CD4-positive, alpha-beta memory T cell (primary cell): ENCODE measurements at regions of chr1 and their contacts with region 1.

Region 1: DNA sequence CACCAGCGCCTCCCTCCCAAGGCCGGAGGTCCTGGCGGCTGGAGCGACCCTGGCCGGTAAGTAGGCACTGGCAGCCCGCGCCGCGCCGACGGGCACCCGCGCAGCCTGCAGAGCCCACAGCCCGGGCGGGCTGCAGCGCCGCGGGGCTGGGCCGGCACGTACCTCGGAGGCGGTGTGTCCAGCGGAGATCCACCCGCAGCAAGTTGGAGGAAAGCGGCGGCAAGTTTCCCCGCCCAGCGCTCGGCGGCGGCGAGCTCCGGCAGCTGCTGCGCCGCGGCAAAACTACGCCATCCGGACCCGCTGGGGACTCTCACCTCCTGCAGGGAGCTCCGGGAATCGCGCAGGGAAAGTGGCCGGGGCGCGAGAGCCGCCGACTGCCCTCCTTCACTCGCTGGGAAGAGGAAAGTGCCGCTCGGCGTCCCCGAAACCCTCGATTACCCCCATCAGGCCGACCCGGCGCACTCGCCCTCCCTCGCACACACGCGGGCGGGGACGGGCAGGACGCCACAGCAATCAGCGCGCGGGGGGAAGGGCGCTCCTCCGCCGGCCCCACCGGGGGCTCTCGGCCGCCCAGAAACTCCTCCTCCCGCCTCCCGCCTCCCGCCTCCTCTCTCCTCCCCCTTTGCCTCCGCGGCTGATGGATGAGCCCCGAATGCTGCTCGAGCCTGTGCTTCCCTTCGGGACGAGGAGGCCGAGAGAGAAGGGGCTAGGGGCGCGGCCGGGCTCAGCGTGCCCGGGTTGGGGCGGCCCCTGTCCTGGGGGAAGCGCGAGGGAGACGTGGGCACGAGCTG is at the start of gene TGFBR3:
- DNase-seq: peak; percentile 78 to 81 (median 80)
- H3K4me3 ChIP-seq: peak within 1 kb of the TSS; percentile 67 to 87
- H3K4me3 Mint-ChIP-seq: peak within 1 kb of the TSS; percentile 94 to 99 (median 97)
- H3K27ac ChIP-seq: peak within 1 kb of the TSS; percentile 65
- H3K27ac Mint-ChIP-seq: peak within 1 kb of the TSS; percentile 84 to 97 (median 94)
- H3K4me1 ChIP-seq: peaks cover 37% of the 10 kb centered on the region
- H3K4me1 Mint-ChIP-seq: peaks cover 30 to 52% (median 39%) of the 10 kb centered on the region in 4 donors
- H3K27me3 ChIP-seq: no peaks in the 10 kb centered on the region
- H3K27me3 Mint-ChIP-seq: no peaks in the 10 kb centered on the region
- total RNA-seq, gene TGFBR3: 44.4 to 47.3 TPM

Region 2: GRCh38 chr1:90308421-90308820 is 1577.5 kb before region 1 on chr1:
- CTCF ChIA-PET with region 1: no interaction called
- POLR2A ChIA-PET with region 1: no interaction called
- intact Hi-C with region 1: no loop called
- DNase-seq: no peak
- H3K4me3 ChIP-seq: no peak overlapping the region
- H3K4me3 Mint-ChIP-seq: no peak overlapping the region
- H3K27ac ChIP-seq: no peak overlapping the region
- H3K27ac Mint-ChIP-seq: no peak overlapping the region
- H3K4me1 ChIP-seq: no peaks in the 10 kb centered on the region
- H3K4me1 Mint-ChIP-seq: no peaks in the 10 kb centered on the region
- H3K27me3 ChIP-seq: no peaks in the 10 kb centered on the region
- H3K27me3 Mint-ChIP-seq: no peaks in the 10 kb centered on the region

Region 3: DNA sequence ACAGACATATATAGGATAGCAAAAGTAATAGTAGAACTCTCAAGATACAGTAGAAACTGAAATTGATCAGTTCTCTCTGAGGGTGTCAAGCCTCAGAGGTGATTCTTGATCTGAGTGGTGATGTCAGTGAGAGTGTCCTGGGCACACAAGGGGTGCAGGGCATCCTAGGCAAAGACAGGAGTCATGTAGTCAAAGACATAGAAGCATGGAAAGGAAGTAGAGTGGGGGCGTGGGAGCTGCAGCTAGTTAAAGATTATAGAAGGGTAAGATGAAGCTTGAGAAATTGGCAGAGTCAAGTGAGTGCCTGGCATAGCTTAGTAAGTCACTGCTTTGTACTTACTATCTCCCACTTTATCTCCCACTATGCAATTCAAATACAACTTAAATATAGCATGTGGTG is 362.4 kb before region 1 on chr1:
- CTCF ChIA-PET with region 1: interaction called, 10 read pairs
- POLR2A ChIA-PET with region 1: interaction called, 4 read pairs
- intact Hi-C with region 1: no loop called
- DNase-seq: no peak
- H3K4me3 ChIP-seq: no peak overlapping the region
- H3K4me3 Mint-ChIP-seq: no peak overlapping the region
- H3K27ac ChIP-seq: no peak overlapping the region
- H3K27ac Mint-ChIP-seq: peak overlapping the region in 4 of 7 donors; percentile 28 to 90 (median 64)
- H3K4me1 ChIP-seq: peaks cover 4% of the 10 kb centered on the region
- H3K4me1 Mint-ChIP-seq: peaks cover 4 to 10% (median 7%) of the 10 kb centered on the region in 4 donors
- H3K27me3 ChIP-seq: no peaks in the 10 kb centered on the region
- H3K27me3 Mint-ChIP-seq: no peaks in the 10 kb centered on the region

Region 4: DNA sequence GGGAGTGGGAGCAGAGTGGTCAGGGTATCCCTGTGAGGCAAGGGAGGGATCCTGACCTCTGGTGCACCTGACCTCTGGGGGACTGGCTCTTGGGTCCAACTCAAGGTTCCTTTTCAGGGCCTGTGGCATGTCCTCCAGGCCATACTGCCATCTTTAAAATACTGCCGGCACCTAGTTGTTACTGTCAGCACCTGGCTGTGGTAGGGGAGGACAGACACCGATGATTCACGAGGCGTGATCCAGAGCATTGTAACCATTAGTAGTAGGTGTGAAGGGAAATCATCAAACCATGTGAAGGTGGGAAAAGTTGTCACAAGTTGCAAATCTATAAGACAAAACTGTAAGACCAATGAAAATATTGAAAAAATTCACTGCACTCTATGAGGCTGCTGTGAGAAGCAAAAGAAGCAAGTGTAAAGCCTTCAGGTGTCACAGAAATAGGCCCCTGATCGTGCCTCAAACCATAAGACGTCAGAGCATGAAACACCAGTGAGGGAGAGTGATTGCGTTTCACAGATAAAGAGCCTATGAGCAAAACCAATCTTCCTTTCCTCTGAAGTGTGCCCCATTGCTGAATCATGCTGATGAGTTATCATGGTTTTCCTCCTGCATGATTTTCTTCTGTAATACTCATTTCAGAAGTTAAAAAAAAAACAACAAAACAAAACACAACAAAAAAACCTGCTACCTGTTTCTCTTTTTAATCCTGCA is 329.9 kb before region 1 on chr1:
- CTCF ChIA-PET with region 1: interaction called, 7 read pairs
- POLR2A ChIA-PET with region 1: interaction called, 4 read pairs
- intact Hi-C with region 1: loop called (anchors 1 kb)
- DNase-seq: peak; percentile 85 to 93 (median 88)
- H3K4me3 ChIP-seq: peak overlapping the region in 1 of 2 donors; percentile 19
- H3K4me3 Mint-ChIP-seq: peak overlapping the region in 7 of 8 donors; percentile 29 to 74 (median 65)
- H3K27ac ChIP-seq: peak overlapping the region; percentile 75
- H3K27ac Mint-ChIP-seq: peak overlapping the region; percentile 88 to 99 (median 94)
- H3K4me1 ChIP-seq: peaks cover 98% of the 10 kb centered on the region
- H3K4me1 Mint-ChIP-seq: peaks cover 65 to 97% (median 82%) of the 10 kb centered on the region in 4 donors
- H3K27me3 ChIP-seq: no peaks in the 10 kb centered on the region
- H3K27me3 Mint-ChIP-seq: no peaks in the 10 kb centered on the region

Region 5: DNA sequence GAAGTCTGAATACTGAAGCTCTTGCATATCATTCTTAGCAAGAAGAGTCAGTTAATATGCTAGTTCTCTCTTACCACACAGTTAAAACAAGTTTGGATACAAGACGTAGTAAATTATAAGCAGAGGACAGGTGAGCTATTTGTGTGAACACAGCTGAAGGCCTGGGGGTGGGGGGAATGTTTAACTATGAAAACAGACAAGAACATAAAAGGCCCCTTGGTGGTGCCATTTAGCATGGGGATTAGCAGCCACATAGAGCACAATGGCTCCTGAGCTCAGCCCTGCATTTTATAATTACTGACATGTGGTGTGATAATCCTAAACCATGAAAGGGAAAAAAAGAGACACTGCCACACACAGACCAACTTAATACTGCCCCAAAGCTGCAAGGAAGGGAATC is 94.8 kb before region 1 on chr1:
- CTCF ChIA-PET with region 1: interaction called, 16 read pairs
- POLR2A ChIA-PET with region 1: no interaction called
- intact Hi-C with region 1: no loop called
- DNase-seq: no peak
- H3K4me3 ChIP-seq: no peak overlapping the region
- H3K4me3 Mint-ChIP-seq: peak overlapping the region in 2 of 8 donors; percentile 47 to 56
- H3K27ac ChIP-seq: no peak overlapping the region
- H3K27ac Mint-ChIP-seq: peak overlapping the region in 3 of 7 donors; percentile 33 to 79 (median 50)
- H3K4me1 ChIP-seq: peaks cover 30% of the 10 kb centered on the region
- H3K4me1 Mint-ChIP-seq: peaks cover 32 to 50% (median 37%) of the 10 kb centered on the region in 4 donors
- H3K27me3 ChIP-seq: no peaks in the 10 kb centered on the region
- H3K27me3 Mint-ChIP-seq: no peaks in the 10 kb centered on the region

Region 6: GRCh38 chr1:91836331-91837040 is 49.4 kb before region 1 on chr1:
- CTCF ChIA-PET with region 1: no interaction called
- POLR2A ChIA-PET with region 1: no interaction called
- intact Hi-C with region 1: no loop called
- DNase-seq: no peak
- H3K4me3 ChIP-seq: no peak overlapping the region
- H3K4me3 Mint-ChIP-seq: no peak overlapping the region
- H3K27ac ChIP-seq: no peak overlapping the region
- H3K27ac Mint-ChIP-seq: peak overlapping the region in 1 of 7 donors; percentile 10
- H3K4me1 ChIP-seq: peaks cover under 1% of the 10 kb centered on the region
- H3K4me1 Mint-ChIP-seq: peaks cover 7 to 28% (median 13%) of the 10 kb centered on the region in 4 donors
- H3K27me3 ChIP-seq: no peaks in the 10 kb centered on the region
- H3K27me3 Mint-ChIP-seq: no peaks in the 10 kb centered on the region

Region 7: DNA sequence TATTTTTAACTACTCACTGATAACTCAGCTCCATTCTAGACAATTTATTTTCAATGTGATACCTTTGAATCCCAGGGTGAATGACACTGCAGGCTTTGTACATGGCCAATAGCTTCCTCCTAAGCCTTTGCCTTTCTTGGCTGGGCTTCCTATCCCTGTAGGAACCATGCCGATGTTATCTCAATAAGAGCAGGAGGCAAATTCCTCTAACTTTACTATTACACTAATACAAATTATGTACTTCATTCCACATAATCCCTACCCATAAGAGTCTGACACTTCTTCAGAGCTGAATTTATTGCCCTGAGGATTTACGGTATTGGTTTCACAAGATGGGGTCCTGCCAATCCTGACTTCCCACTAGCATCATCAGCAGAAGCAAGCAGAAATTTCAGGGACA is 13.9 kb before region 1 on chr1:
- CTCF ChIA-PET with region 1: interaction called, 13 read pairs
- POLR2A ChIA-PET with region 1: interaction called, 9 read pairs
- intact Hi-C with region 1: no loop called
- DNase-seq: no peak
- H3K4me3 ChIP-seq: no peak overlapping the region
- H3K4me3 Mint-ChIP-seq: peak overlapping the region in 6 of 8 donors; percentile 9 to 86 (median 64)
- H3K27ac ChIP-seq: no peak overlapping the region
- H3K27ac Mint-ChIP-seq: peak overlapping the region in 3 of 7 donors; percentile 57 to 79 (median 58)
- H3K4me1 ChIP-seq: peaks cover 65% of the 10 kb centered on the region
- H3K4me1 Mint-ChIP-seq: peaks cover 44 to 75% (median 58%) of the 10 kb centered on the region in 4 donors
- H3K27me3 ChIP-seq: no peaks in the 10 kb centered on the region
- H3K27me3 Mint-ChIP-seq: no peaks in the 10 kb centered on the region

Region 8: GRCh38 chr1:91924146-91924545 is 38.2 kb after region 1 on chr1:
- CTCF ChIA-PET with region 1: interaction called, 28 read pairs
- POLR2A ChIA-PET with region 1: no interaction called
- intact Hi-C with region 1: loop called (anchors 2 kb)
- DNase-seq: no peak
- H3K4me3 ChIP-seq: no peak overlapping the region
- H3K4me3 Mint-ChIP-seq: no peak overlapping the region
- H3K27ac ChIP-seq: no peak overlapping the region
- H3K27ac Mint-ChIP-seq: peak overlapping the region in 1 of 7 donors; percentile 42
- H3K4me1 ChIP-seq: no peaks in the 10 kb centered on the region
- H3K4me1 Mint-ChIP-seq: peaks cover 0 to 7% (median 5%) of the 10 kb centered on the region in 4 donors
- H3K27me3 ChIP-seq: no peaks in the 10 kb centered on the region
- H3K27me3 Mint-ChIP-seq: peaks cover 0 to 2% of the 10 kb centered on the region in 2 donors

Region 9: GRCh38 chr1:92123868-92124267 is 238.0 kb after region 1 on chr1:
- CTCF ChIA-PET with region 1: no interaction called
- POLR2A ChIA-PET with region 1: no interaction called
- intact Hi-C with region 1: no loop called
- DNase-seq: peak in 1 of 5 donors; percentile 4
- H3K4me3 ChIP-seq: no peak overlapping the region
- H3K4me3 Mint-ChIP-seq: peak overlapping the region in 7 of 8 donors; percentile 3 to 73 (median 59)
- H3K27ac ChIP-seq: no peak overlapping the region
- H3K27ac Mint-ChIP-seq: peak overlapping the region in 3 of 7 donors; percentile 7 to 48 (median 21)
- H3K4me1 ChIP-seq: no peaks in the 10 kb centered on the region
- H3K4me1 Mint-ChIP-seq: peaks cover 1 to 8% (median 6%) of the 10 kb centered on the region in 4 donors
- H3K27me3 ChIP-seq: no peaks in the 10 kb centered on the region
- H3K27me3 Mint-ChIP-seq: no peaks in the 10 kb centered on the region